SK-N-SH (cell line): ENCODE measurements at regions of chr1 and their contacts with region 1.

Region 1: GRCh38 chr1:23809751-23810171 is 9.2 kb upstream of the GALE start:
- DNase-seq: peak; percentile 74
- H3K4me3 ChIP-seq: peak overlapping the region in 1 of 2 experiments; percentile 26; a peak in 1 of 4 replicates
- H3K27ac ChIP-seq: no peak overlapping the region
- H3K4me1 ChIP-seq: no peaks in the 10 kb centered on the region
- H3K27me3 ChIP-seq: no peaks in the 10 kb centered on the region
- CTCF ChIP-seq: peak; percentile 66
- EP300 ChIP-seq: no peak
- RAD21 ChIP-seq: peak; percentile 73

Region 2: GRCh38 chr1:23790696-23791515 is 18.9 kb before region 1 on chr1 and contains the start of gene LYPLA2:
- CTCF ChIA-PET with region 1: interaction called, 11 read pairs
- POLR2A ChIA-PET with region 1: no interaction called
- DNase-seq: peak; percentile 94
- H3K4me3 ChIP-seq: peak within 1 kb of the TSS; percentile 97 to 98
- H3K27ac ChIP-seq: peak within 1 kb of the TSS; percentile 73 to 91
- H3K4me1 ChIP-seq: peaks cover 6 to 21% of the 10 kb centered on the region in 2 experiments; a peak in 3 of 4 replicates
- H3K27me3 ChIP-seq: no peaks in the 10 kb centered on the region
- CTCF ChIP-seq: no peak
- EP300 ChIP-seq: peak in 1 of 2 experiments; percentile 27; a peak in 1 of 4 replicates
- RAD21 ChIP-seq: no peak
- polyA plus RNA-seq, gene LYPLA2: 109 and 135 TPM in 2 replicates

Region 3: DNA sequence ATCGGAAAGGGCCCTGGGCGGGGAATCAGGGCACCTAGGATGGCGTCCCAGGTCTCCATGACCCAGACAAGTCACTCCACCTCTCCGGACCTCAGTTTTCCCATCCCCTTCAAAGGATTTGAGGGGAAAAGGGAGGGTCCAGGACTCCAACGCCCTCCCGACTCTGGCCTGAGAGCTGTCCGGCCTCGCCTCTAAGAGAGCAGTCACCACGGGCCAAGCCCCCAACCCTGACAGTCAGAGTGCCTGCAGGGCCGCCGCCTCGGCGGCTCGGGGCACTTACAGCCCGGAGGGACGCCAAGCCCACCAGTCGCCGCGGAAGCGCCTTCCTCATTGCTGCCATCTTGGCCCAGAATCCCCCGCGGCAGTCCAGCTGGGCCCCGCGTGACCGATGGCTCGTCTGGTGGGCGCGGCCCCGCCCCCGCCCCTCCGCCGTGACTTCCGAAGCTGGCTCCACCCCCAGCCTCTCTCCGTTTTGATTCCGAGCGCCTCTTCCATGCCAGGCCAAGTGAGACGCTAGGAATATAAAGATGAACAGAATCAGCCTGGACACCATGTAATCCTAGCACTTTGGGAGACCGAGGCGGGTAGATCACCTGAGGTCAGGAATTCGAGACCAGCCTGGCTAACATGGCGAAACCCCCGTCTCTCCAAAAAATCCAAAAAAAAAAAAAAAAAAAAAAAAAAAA is 15.5 kb after region 1 on chr1 and contains the start of gene HMGCL:
- CTCF ChIA-PET with region 1: interaction called, 27 read pairs
- POLR2A ChIA-PET with region 1: interaction called, 4 read pairs
- DNase-seq: peak; percentile 96
- H3K4me3 ChIP-seq: peak within 1 kb of the TSS; percentile 84 to 95
- H3K27ac ChIP-seq: peak within 1 kb of the TSS; percentile 82 to 85
- H3K4me1 ChIP-seq: peaks cover 2 to 8% of the 10 kb centered on the region in 2 experiments; a peak in 2 of 4 replicates
- H3K27me3 ChIP-seq: no peaks in the 10 kb centered on the region
- CTCF ChIP-seq: no peak
- EP300 ChIP-seq: 0 out of 4 replicates have a peak, but pooled peaks of 1 of the 2 experiments have one; percentile 6
- RAD21 ChIP-seq: no peak
- polyA plus RNA-seq, gene HMGCL: 28.2 and 36.5 TPM in 2 replicates

Region 4: DNA sequence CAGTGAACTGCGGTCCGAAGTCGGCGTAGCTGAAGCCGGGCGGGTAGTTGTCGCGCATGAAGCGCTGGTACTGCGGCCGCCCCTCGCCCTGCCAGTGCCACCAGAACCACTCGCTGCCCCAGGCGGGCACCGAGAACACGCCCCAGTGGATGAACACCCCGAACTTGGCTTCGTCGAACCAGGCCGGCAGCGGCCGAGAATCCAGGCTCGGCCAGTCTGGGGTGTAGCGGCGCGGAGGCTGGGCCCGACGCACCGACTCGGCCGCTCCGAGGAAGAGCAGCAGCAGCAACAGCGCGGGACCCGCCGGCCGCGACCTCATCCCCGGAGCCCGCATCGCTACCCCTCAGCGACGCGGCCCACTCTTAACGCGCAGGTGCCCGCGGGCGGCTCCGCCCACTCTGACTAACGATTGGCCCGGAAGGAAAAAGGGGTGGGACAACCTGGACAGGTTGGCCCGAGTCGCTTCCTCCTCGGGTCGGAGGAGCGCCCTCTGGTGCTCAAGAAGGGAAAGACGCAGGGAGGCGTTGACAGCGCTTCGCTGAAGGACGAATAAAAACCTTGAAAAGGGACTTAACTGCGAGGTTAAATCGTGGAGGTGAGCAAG is 58.3 kb after region 1 on chr1 and contains the start of gene FUCA1:
- CTCF ChIA-PET with region 1: interaction called, 31 read pairs
- POLR2A ChIA-PET with region 1: no interaction called
- DNase-seq: peak; percentile 98
- H3K4me3 ChIP-seq: peak within 1 kb of the TSS; percentile 75 to 87
- H3K27ac ChIP-seq: no peak within 1 kb of the TSS; a peak in 1 of 4 replicates
- H3K4me1 ChIP-seq: peaks cover 0 to 8% of the 10 kb centered on the region in 2 experiments; a peak in 1 of 4 replicates
- H3K27me3 ChIP-seq: no peaks in the 10 kb centered on the region; the same call in 1 of the 2 replicates
- CTCF ChIP-seq: peak; percentile 87
- EP300 ChIP-seq: no peak
- RAD21 ChIP-seq: peak; percentile 68
- polyA plus RNA-seq, gene FUCA1: 31.9 and 35.2 TPM in 2 replicates